A673 (cell line): ENCODE measurements at regions of chr11 and their contacts with region 1.

Region 1: GRCh38 chr11:76207642-76208401 is 1.5 kb upstream of the WNT11 start:
- DNase-seq: peak; percentile 93
- H3K4me3 ChIP-seq: peak overlapping the region; percentile 56
- H3K27ac ChIP-seq: no peak overlapping the region
- H3K4me1 ChIP-seq: peaks cover 34% of the 10 kb centered on the region
- H3K27me3 ChIP-seq: peaks cover 69% of the 10 kb centered on the region
- CTCF ChIP-seq: peak; percentile 93

Region 2: GRCh38 chr11:75777461-75778110 is 430.2 kb before region 1 on chr11:
- CTCF ChIA-PET with region 1: no interaction called
- POLR2A ChIA-PET with region 1: no interaction called
- intact Hi-C with region 1: no loop called
- DNase-seq: peak; percentile 26
- H3K4me3 ChIP-seq: no peak overlapping the region
- H3K27ac ChIP-seq: no peak overlapping the region
- H3K4me1 ChIP-seq: no peaks in the 10 kb centered on the region
- H3K27me3 ChIP-seq: no peaks in the 10 kb centered on the region
- CTCF ChIP-seq: no peak

Region 3: DNA sequence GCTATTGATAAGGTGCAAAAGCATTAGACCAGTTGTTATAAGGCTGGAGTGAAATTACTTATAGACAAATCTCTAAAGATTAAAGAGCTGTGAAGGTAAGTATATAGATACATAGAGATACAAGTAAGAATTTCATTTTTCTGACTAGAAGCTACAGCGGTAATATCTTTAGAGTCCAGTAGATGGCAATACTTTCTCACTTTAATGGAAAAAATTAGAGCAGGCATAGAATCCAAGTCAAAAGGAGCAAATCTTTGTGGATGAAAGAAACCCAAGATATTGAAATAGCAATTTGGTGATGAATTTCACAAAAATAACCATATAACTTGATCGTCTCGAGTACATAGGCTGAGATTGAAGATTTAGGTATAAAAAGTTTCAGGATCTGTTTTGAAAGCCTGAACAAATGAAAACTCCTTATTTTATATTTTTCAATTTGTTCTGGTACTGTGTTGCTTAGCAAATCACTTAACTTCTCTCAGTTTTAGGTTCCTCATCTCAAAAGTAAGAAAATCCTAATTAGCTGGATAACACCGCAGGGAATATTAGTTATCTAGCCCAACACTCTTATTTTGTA is 310.9 kb before region 1 on chr11:
- CTCF ChIA-PET with region 1: interaction called, 7 read pairs
- POLR2A ChIA-PET with region 1: no interaction called
- intact Hi-C with region 1: loop called (anchors 5 kb)
- DNase-seq: peak; percentile 75
- H3K4me3 ChIP-seq: no peak overlapping the region
- H3K27ac ChIP-seq: no peak overlapping the region
- H3K4me1 ChIP-seq: no peaks in the 10 kb centered on the region
- H3K27me3 ChIP-seq: no peaks in the 10 kb centered on the region
- CTCF ChIP-seq: peak; percentile 81

Region 4: GRCh38 chr11:76141901-76142588 is 65.8 kb before region 1 on chr11:
- CTCF ChIA-PET with region 1: no interaction called
- POLR2A ChIA-PET with region 1: no interaction called
- intact Hi-C with region 1: no loop called
- DNase-seq: no peak
- H3K4me3 ChIP-seq: no peak overlapping the region
- H3K27ac ChIP-seq: no peak overlapping the region
- H3K4me1 ChIP-seq: no peaks in the 10 kb centered on the region
- H3K27me3 ChIP-seq: no peaks in the 10 kb centered on the region
- CTCF ChIP-seq: no peak

Region 5: DNA sequence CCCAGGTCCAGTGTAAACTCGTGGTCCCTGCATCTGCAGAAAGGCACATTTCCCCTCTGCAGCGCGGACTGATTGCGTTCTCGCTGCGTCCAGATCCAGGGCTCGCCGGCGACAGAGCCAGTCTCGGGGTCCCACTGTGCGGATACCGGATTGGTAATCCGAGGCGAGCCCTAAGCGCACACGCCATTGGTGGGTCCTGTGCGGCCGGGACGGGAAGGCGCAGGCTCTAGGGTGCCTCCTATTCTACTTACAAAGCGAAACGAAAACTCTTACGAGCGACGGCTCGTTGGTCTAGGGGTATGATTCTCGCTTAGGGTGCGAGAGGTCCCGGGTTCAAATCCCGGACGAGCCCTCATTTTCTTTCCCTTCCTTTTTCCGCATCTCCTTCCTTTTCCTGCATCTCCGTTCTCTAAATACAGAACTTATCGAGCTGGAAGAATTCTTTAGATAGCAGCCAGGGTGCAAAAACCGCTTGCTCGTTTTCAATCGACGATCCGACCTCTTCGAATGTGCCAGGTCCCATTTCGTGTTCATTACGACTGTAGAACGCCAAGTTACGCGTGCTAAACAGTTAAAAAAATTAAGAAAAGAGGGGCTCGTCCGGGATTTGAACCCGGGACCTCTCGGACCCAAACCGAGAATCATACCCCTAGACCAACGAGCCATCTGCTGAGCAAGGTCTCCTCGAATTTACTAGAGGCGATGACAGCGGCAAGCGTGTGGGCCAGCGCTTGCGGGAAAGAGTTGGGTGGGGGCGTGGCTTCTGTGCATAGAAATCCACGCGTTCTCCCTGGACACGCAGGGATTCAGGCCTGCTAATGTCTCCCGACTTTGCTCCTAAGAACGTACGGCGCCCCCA is 27.6 kb after region 1 on chr11:
- CTCF ChIA-PET with region 1: interaction called, 11 read pairs
- POLR2A ChIA-PET with region 1: no interaction called
- intact Hi-C with region 1: loop called (anchors 2 kb)
- DNase-seq: peak; percentile 98
- H3K4me3 ChIP-seq: peak overlapping the region; percentile 74
- H3K27ac ChIP-seq: peak overlapping the region; percentile 75
- H3K4me1 ChIP-seq: peaks cover 8% of the 10 kb centered on the region
- H3K27me3 ChIP-seq: no peaks in the 10 kb centered on the region
- CTCF ChIP-seq: no peak

Region 6: GRCh38 chr11:76436020-76436419 is 228.2 kb after region 1 on chr11:
- CTCF ChIA-PET with region 1: no interaction called
- POLR2A ChIA-PET with region 1: no interaction called
- intact Hi-C with region 1: no loop called
- DNase-seq: no peak
- H3K4me3 ChIP-seq: no peak overlapping the region
- H3K27ac ChIP-seq: no peak overlapping the region
- H3K4me1 ChIP-seq: no peaks in the 10 kb centered on the region
- H3K27me3 ChIP-seq: no peaks in the 10 kb centered on the region
- CTCF ChIP-seq: no peak

Region 7: GRCh38 chr11:76512851-76513653 is 305.2 kb after region 1 on chr11:
- CTCF ChIA-PET with region 1: interaction called, 6 read pairs
- POLR2A ChIA-PET with region 1: no interaction called
- intact Hi-C with region 1: loop called (anchors 5 kb)
- DNase-seq: peak; percentile 52
- H3K4me3 ChIP-seq: no peak overlapping the region
- H3K27ac ChIP-seq: no peak overlapping the region
- H3K4me1 ChIP-seq: peaks cover 26% of the 10 kb centered on the region
- H3K27me3 ChIP-seq: no peaks in the 10 kb centered on the region
- CTCF ChIP-seq: peak; percentile 68